MCF 10A (cell line): ENCODE measurements at regions of chr1 and their contacts with region 1.

Region 1: GRCh38 chr1:61453111-61453961 is 271.6 kb downstream of the TM2D1 start:
- DNase-seq: peak; percentile 92
- H3K4me3 Mint-ChIP-seq: no peak overlapping the region
- H3K27ac Mint-ChIP-seq: peak overlapping the region; percentile 90
- H3K4me1 Mint-ChIP-seq: peaks cover 13% of the 10 kb centered on the region
- H3K27me3 Mint-ChIP-seq: no peaks in the 10 kb centered on the region
- CTCF ChIP-seq: peak; percentile 58

Region 2: DNA sequence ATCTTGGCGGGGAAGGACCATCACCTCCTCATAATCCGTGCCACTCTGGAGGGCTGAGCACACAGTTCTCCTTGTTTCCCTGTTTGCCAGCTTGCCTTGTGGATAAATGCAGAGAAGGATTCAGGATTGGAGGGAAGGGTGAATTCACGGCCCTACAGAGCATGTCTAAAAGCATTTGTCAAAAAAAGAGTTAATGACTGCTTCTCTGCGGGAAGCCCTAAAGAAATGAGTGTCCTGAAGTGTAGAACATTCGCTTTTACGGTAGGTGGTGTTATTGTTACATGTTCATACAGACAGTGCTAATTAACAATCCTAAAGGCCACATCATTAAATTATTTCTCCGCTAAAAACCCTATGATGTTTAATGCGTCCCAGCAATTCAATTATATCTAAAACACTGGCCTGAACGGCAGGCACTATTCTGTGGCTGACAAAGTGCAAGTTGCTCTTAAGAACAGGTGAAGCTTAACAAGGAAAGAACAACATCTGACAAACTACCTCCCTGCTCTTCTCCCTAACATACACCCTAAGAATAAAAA is 483.3 kb before region 1 on chr1:
- CTCF ChIA-PET with region 1: interaction called, 14 read pairs
- POLR2A ChIA-PET with region 1: interaction called, 3 read pairs
- intact Hi-C with region 1: loop called (anchors 1 kb)
- DNase-seq: peak; percentile 43
- H3K4me3 Mint-ChIP-seq: no peak overlapping the region
- H3K27ac Mint-ChIP-seq: no peak overlapping the region
- H3K4me1 Mint-ChIP-seq: peaks cover 18% of the 10 kb centered on the region
- H3K27me3 Mint-ChIP-seq: no peaks in the 10 kb centered on the region
- CTCF ChIP-seq: peak; percentile 46

Region 3: DNA sequence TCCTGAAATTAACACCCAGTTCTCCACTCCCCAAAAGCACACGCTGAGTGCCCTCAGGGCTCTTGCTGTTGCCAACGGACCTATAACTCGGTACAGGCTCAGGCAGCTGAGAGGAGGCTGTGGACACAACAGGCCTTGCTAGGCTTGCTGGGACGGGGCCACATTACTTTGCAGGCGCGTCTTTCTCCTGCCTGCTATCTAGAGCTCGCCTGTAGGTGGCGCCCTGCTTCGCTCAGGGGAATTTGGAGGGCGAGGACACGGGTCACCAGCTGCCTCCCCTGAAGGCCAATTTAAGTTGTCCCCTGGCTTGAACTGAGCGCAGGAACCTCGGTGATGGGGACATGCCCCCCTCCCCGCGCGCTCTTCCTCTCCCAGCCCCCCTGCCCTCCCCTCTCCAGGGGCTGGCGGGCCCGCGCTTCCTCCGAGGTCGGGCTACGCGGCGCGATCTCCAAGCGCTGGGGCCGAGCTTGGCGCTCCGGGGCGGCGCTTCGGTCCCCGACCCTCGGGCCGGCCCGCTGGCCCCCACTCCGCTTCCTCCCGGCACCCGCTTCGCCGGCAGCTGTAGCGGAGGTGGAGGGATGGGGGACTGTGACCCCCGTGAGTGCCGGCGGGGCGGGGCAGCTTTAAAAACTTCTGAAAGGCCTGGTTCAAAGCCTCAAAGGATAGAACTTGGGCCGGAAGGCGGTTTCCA is 403.3 kb before region 1 on chr1:
- CTCF ChIA-PET with region 1: interaction called, 36 read pairs
- POLR2A ChIA-PET with region 1: no interaction called
- intact Hi-C with region 1: loop called (anchors 1 kb)
- DNase-seq: peak; percentile 90
- H3K4me3 Mint-ChIP-seq: peak overlapping the region; percentile 76
- H3K27ac Mint-ChIP-seq: peak overlapping the region; percentile 19
- H3K4me1 Mint-ChIP-seq: peaks cover 20% of the 10 kb centered on the region
- H3K27me3 Mint-ChIP-seq: no peaks in the 10 kb centered on the region
- CTCF ChIP-seq: peak; percentile 93

Region 4: DNA sequence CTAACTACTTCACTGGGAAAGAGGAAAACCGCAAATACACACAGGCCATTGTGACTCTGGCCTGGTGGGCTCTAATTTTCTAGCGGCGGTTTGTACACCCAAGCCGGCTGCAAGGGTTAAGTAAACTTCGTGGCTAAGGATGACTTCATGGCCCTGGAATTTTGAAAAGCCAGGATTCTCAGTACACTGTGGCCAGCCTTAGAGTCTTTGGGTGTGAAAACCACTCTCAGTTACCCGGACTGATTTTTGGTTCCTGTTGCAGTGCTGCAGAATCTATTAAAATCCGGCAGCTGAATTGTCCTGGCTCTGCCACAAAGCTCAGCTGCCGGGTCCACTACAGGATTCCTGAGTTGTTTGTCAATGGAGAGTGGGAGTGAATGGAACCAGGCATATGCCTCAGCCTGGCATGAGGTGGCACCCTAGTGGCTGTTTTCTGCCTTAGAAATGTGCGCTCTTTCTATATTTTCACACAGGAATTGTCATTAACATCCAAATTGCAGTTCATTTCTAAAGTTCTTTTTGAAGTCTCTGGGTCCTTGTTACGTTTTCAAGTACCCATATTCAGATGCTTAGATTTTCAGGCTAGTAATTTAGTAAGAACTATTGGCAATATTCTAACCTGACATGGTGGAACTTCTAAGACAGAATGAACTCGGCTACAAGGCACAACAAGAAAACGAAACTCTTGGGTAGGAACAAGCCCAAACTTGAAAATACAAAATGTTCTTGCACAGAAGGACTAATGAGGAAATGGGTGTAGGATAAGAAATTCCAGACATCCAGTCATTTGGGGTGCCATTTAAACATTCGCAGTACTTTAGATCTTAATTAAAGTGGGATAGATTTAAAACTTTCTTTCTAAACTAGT is 115.1 kb before region 1 on chr1:
- CTCF ChIA-PET with region 1: interaction called, 4 read pairs
- POLR2A ChIA-PET with region 1: interaction called, 5 read pairs
- intact Hi-C with region 1: loop called (anchors 1 kb)
- DNase-seq: peak; percentile 91
- H3K4me3 Mint-ChIP-seq: peak overlapping the region; percentile 70
- H3K27ac Mint-ChIP-seq: peak overlapping the region; percentile 96
- H3K4me1 Mint-ChIP-seq: peaks cover 28% of the 10 kb centered on the region
- H3K27me3 Mint-ChIP-seq: no peaks in the 10 kb centered on the region
- CTCF ChIP-seq: peak; percentile 81

Region 5: DNA sequence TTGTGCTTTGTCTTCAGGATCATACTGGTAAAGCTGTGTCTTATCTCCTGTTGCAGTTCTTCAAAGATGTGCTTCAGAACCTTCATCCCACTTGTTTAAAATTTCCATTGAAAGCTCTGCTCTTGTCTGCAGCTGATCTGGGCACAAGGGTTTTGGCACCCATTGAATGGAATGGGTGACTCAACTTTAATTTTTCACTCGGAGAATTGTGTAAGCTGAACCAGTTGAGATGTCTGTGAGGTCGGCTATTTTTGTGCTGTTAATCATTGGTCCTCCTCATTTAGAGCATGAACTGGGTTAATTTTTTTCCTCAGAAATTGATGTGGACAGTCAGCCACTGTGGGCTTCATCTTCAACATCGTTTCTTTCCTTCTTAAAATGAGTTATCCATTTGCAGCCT is 19.5 kb after region 1 on chr1:
- CTCF ChIA-PET with region 1: interaction called, 11 read pairs
- POLR2A ChIA-PET with region 1: interaction called, 3 read pairs
- intact Hi-C with region 1: no loop called
- DNase-seq: peak; percentile 79
- H3K4me3 Mint-ChIP-seq: no peak overlapping the region
- H3K27ac Mint-ChIP-seq: no peak overlapping the region
- H3K4me1 Mint-ChIP-seq: peaks cover 15% of the 10 kb centered on the region
- H3K27me3 Mint-ChIP-seq: no peaks in the 10 kb centered on the region
- CTCF ChIP-seq: no peak

Region 6: DNA sequence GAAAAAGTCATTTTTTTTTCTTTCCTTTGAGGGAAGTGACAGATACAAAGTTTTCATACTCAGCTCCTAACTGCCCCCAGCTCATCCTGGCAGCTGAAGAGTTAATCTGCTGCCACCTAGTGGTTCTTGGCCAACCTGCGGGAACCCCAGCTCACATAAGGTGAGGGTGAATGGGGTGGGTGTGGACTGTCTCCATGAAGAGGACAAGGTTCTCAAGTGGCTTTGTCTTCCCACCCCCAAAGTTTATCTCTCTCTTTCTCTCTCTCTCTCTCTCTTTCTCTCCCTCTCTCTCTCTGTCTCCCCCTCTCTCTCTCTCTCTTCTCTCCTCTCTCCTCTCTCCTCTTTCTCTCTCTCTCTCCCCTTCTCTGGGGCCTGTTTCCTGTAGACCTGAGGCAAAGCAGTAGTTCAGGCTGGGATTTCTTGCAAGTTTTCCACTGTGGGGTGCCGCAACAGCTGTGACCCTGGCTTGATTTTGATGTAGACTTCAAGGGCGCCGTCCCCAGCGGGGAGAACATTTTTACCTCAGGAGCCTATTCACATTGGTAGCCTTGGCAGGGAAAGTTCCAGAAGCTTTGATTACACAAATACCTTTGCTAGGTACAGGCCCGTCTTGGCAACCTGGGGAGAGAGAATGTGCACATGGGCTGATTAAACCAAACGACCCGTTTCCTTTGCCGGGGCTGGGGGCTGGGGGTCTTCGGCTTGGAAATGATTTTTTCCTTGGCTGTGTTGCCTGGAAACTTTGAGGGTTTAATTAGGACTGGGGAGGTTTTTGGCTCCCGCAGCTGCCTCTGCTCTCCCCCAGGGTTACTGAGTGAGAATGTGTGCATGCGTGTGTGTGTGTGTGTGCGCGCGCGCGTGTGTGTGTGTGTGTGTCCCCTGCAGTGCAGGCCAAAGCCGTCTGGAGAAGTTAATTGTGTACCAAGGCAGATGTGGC is 135.7 kb after region 1 on chr1:
- CTCF ChIA-PET with region 1: interaction called, 9 read pairs
- POLR2A ChIA-PET with region 1: interaction called, 5 read pairs
- intact Hi-C with region 1: loop called (anchors 1 kb)
- DNase-seq: peak; percentile 80
- H3K4me3 Mint-ChIP-seq: no peak overlapping the region
- H3K27ac Mint-ChIP-seq: no peak overlapping the region
- H3K4me1 Mint-ChIP-seq: peaks cover 25% of the 10 kb centered on the region
- H3K27me3 Mint-ChIP-seq: no peaks in the 10 kb centered on the region
- CTCF ChIP-seq: peak; percentile 80